SK-N-SH (cell line): ENCODE measurements at regions of chr19 and their contacts with region 1.

Region 1: DNA sequence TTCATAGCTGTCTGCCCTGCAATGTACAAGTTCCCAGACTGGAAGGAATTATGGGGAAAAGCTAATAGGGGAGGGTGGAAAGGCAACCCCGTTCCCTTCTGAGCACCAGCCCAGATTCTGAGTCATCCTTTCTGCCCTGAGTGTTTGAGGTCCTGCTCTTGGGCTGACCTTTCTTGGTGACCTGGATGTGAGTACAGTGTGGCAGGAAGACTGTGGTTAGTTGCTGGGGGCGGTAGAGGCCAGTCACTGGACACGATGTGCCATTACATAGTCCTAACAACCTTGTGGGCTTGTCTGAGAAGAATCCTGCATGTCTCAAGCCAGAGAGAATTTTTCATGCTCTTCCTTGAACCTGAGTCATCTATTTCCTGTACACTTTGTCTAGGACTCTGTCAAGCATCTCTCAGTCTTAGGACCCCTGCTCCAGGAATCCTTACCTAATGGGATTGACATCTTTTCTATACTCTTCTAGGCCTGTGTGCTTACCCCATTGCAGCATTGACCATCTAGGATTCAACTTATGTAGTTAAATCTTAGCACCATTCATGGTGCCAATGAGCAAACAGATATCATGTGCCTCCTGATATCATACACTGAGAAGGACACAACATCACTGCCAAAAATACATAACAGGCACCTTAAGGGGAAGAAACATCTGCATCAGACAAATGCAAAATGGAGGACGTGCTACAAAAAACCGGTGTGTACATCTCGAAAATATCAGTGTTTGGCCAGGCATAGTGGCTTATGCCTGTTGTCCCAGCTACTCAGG is 8.1 kb upstream of the ANGPTL4 start:
- DNase-seq: no peak
- H3K4me3 ChIP-seq: no peak overlapping the region
- H3K27ac ChIP-seq: peak overlapping the region in 1 of 2 experiments; percentile 92; a peak in 2 of 4 replicates
- H3K4me1 ChIP-seq: peaks cover 0 to 12% of the 10 kb centered on the region in 2 experiments; a peak in 2 of 4 replicates
- H3K27me3 ChIP-seq: no peaks in the 10 kb centered on the region
- CTCF ChIP-seq: no peak
- EP300 ChIP-seq: peak in 1 of 2 experiments; percentile 84; a peak in 1 of 4 replicates
- RAD21 ChIP-seq: no peak

Region 2: DNA sequence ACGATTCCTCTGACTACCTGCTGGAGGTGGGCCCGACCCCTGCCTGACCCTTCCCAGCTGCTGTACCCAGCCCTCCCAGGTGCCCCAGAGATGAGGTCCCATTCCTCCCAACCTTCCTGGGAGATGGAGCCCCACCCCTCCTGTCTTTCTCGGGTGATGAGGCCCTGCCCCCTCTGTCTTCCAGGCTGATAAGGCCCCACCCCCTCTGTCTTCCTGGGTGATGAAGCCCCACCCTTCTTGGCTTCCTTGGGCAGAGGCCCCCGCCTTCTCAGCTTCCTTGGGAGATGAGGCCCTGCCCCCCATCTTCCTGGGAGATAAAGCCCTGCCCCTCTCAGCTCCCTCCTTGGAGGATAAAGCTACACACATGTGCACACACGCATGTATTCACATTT is 98.8 kb before region 1 on chr19:
- CTCF ChIA-PET with region 1: no interaction called
- POLR2A ChIA-PET with region 1: no interaction called
- DNase-seq: no peak
- H3K4me3 ChIP-seq: no peak overlapping the region
- H3K27ac ChIP-seq: no peak overlapping the region
- H3K4me1 ChIP-seq: no peaks in the 10 kb centered on the region; a peak in 1 of 4 replicates
- H3K27me3 ChIP-seq: no peaks in the 10 kb centered on the region
- CTCF ChIP-seq: no peak
- EP300 ChIP-seq: no peak
- RAD21 ChIP-seq: no peak

Region 3: DNA sequence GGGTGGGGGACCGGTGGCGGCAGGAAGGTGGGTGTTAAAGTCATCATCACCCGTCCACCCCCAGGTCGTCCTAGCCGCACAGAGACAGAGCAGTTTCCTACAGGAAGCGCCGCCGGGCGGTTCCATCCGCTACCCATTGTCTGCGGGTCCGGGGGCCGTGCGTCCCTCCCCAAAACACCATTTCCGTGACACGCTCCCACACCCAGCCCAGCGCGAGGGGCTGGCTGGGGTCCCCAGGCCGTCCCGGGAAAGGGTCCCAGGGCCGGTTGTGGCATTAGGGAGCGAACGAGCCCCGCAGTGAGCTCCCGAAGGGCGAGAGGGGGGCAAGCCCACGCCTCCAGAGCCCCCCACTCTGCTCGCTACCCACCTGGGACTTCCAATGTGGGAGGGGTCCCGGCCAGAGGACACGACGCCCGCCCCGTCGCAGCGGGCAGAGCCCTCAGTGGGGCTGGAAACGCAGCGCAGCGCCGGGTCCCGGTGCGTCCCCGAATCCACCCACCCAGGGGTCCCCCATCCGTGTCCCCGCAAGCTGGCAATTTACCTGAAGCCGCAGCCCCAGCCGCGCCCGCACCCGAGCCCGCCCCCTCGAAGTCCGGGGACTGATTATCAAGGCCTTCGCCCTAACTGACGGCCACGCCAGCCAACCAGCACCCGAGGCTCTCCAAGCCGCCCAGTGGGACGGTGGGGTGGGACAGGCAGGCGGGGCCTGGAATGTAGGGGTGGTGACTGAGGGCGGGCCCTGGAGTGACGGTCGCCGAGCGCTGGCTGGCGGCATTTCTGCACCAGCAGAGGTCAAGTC is 12.9 kb before region 1 on chr19 and contains the start of gene KANK3:
- CTCF ChIA-PET with region 1: interaction called, 61 read pairs
- POLR2A ChIA-PET with region 1: no interaction called
- DNase-seq: peak; percentile 99
- H3K4me3 ChIP-seq: peak within 1 kb of the TSS; percentile 39 to 50; a peak in 3 of 4 replicates
- H3K27ac ChIP-seq: no peak within 1 kb of the TSS
- H3K4me1 ChIP-seq: no peaks in the 10 kb centered on the region; a peak in 1 of 4 replicates
- H3K27me3 ChIP-seq: peaks cover 7% of the 10 kb centered on the region; the same call in 1 of the 2 replicates
- CTCF ChIP-seq: no peak
- EP300 ChIP-seq: no peak
- RAD21 ChIP-seq: no peak
- polyA plus RNA-seq, gene KANK3: 0.51 and 0.91 TPM in 2 replicates

Region 4: DNA sequence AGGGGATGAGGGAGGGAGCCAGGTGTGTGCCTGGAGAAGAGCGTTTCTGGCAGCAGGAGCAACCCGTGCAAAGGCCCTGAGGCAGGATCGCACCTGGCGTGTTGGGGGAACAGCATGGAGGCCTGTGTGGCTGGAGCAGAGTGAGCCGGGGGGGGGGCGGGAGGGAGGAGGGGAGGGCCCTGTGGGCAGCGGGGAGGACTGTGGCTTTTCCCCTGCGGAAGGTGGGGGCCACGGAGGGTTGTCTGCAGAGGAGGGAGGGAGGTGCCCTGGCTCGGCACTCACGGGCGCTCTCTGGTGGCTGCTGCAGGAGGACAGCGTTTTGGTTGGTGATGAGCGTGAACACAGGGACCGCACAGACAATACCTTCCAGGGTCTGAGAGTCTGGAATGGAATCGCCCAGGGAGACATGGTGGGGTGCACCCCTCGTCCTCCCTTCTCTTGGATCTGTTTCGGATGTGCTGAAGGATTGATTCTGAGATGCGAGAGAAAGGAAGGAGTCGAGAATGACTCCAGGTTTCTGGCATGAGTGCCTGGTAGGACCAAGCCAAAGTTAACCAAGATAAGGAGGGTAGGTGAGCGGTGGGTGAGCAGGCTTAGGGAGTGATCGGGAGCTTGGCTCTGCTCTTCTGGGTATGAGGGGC is 40.9 kb after region 1 on chr19:
- CTCF ChIA-PET with region 1: interaction called, 78 read pairs
- POLR2A ChIA-PET with region 1: no interaction called
- DNase-seq: peak; percentile 86
- H3K4me3 ChIP-seq: no peak overlapping the region
- H3K27ac ChIP-seq: no peak overlapping the region
- H3K4me1 ChIP-seq: peaks cover 2 to 26% of the 10 kb centered on the region in 2 experiments; a peak in 2 of 4 replicates
- H3K27me3 ChIP-seq: no peaks in the 10 kb centered on the region
- CTCF ChIP-seq: peak; percentile 74
- EP300 ChIP-seq: no peak
- RAD21 ChIP-seq: peak; percentile 70

Region 5: GRCh38 chr19:8441725-8442544 is 86.1 kb after region 1 on chr19:
- CTCF ChIA-PET with region 1: interaction called, 14 read pairs
- POLR2A ChIA-PET with region 1: no interaction called
- DNase-seq: no peak
- H3K4me3 ChIP-seq: no peak overlapping the region
- H3K27ac ChIP-seq: no peak overlapping the region
- H3K4me1 ChIP-seq: peaks cover 8% of the 10 kb centered on the region in 2 experiments; a peak in 3 of 4 replicates
- H3K27me3 ChIP-seq: no peaks in the 10 kb centered on the region
- CTCF ChIP-seq: no peak
- EP300 ChIP-seq: no peak
- RAD21 ChIP-seq: no peak

Region 6: GRCh38 chr19:8505680-8506401 is 150.0 kb after region 1 on chr19:
- CTCF ChIA-PET with region 1: interaction called, 51 read pairs
- POLR2A ChIA-PET with region 1: interaction called, 3 read pairs
- DNase-seq: peak; percentile 98
- H3K4me3 ChIP-seq: peak overlapping the region; percentile 54 to 69
- H3K27ac ChIP-seq: peak overlapping the region in 1 of 2 experiments; percentile 48; a peak in 2 of 4 replicates
- H3K4me1 ChIP-seq: peaks cover 0 to 5% of the 10 kb centered on the region in 2 experiments; a peak in 1 of 4 replicates
- H3K27me3 ChIP-seq: no peaks in the 10 kb centered on the region
- CTCF ChIP-seq: peak; percentile 91
- EP300 ChIP-seq: no peak
- RAD21 ChIP-seq: peak; percentile 73